Activated T-helper 1 cell treated with anti-CD3 and anti-CD28 coated beads, Interleukin-12 subunit alpha, Interleukin-12 subunit beta, Interleukin-2, Interleukin-4 antibody, amounts not matched to agents 30 ng/mL and 10 ng/mL and 1 ng/mL, durations not matched to agents 14 hours and 24 hours and 36 hours (primary cell): ENCODE measurements at regions of chr14 and their contacts with region 1.

Region 1: GRCh38 chr14:21437063-21437901 is 18.6 kb downstream of the CHD8 start:
- DNase-seq: peak; percentile 97
- H3K4me3 Mint-ChIP-seq: peak overlapping the region; percentile 93
- H3K27ac Mint-ChIP-seq: peak overlapping the region; percentile 73
- H3K4me1 Mint-ChIP-seq: peaks cover 67% of the 10 kb centered on the region
- H3K27me3 Mint-ChIP-seq: no peaks in the 10 kb centered on the region

Region 2: DNA sequence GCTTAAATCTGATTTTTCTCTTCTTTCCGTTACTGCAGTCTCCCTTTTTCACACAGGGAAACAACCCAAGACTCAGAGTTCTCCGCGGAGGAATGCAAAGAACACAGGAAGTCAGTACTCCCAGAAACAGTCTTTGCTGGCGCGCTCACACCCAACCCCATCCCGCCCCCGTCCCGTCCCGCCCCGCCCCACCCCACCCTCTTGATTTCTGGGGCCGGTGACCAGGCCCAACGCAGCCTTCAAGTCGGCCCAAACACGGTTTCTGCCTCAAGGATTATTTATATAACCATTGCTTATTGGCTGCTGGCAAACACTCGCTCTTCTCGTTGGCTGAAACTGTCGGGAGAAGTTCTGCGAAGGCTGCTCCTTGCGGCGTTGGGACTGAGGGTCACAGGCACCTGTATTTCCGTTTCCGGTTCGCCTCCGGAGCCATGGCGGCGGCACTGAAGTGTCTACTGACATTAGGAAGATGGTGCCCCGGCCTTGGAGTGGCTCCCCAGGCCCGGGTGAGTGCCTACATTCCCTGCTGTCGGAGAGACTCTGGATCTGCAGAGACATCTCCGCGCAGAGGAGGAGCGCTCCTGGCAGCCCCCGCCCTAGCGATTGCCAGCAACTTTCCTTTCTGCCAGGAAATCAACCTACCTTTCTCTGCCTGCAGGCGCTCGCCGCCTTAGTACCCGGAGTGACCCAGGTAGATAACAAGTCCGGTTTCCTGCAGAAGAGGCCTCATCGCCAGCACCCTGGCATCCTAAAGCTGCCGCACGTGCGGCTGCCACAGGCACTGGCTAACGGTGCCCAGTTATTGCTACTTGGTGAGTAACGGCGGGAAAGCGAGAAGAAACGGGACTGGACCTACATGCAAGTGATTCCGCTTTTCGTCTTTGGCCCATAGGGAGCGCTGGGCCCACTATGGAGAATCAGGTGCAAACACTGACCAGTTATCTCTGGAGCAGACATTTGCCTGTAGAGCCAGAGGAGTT is 447.4 kb before region 1 on chr14 and contains the start of gene METTL17:
- intact Hi-C with region 1: loop called (anchors 1 kb)
- DNase-seq: peak; percentile 83
- H3K4me3 Mint-ChIP-seq: peak within 1 kb of the TSS; percentile 96
- H3K27ac Mint-ChIP-seq: peak within 1 kb of the TSS; percentile 85
- H3K4me1 Mint-ChIP-seq: peaks cover 25% of the 10 kb centered on the region
- H3K27me3 Mint-ChIP-seq: no peaks in the 10 kb centered on the region
- total RNA-seq, gene METTL17: 96.1 and 100 TPM in 2 replicates

Region 3: GRCh38 chr14:21414137-21414631 is 23.1 kb before region 1 on chr14:
- intact Hi-C with region 1: loop called (anchors 1 kb)
- DNase-seq: no peak
- H3K4me3 Mint-ChIP-seq: peak overlapping the region; percentile 19
- H3K27ac Mint-ChIP-seq: peak overlapping the region; percentile 92
- H3K4me1 Mint-ChIP-seq: peaks cover 26% of the 10 kb centered on the region
- H3K27me3 Mint-ChIP-seq: no peaks in the 10 kb centered on the region

Region 4: GRCh38 chr14:21476925-21477681 is 39.8 kb after region 1 on chr14 and contains the starts of genes RAB2B and TOX4:
- intact Hi-C with region 1: loop called (anchors 1 kb)
- DNase-seq: peak; percentile 96
- H3K4me3 Mint-ChIP-seq: peak within 1 kb of the TSS; percentile 100
- H3K27ac Mint-ChIP-seq: peak within 1 kb of the TSS; percentile 99
- H3K4me1 Mint-ChIP-seq: peaks cover 35% of the 10 kb centered on the region
- H3K27me3 Mint-ChIP-seq: peaks cover 2% of the 10 kb centered on the region
- total RNA-seq, gene RAB2B: 30.3 and 32.5 TPM in 2 replicates
- total RNA-seq, gene TOX4: 77.5 and 86.6 TPM in 2 replicates

Region 5: GRCh38 chr14:21525962-21526671 is 88.8 kb after region 1 on chr14 and contains the start of gene SALL2:
- intact Hi-C with region 1: loop called (anchors 1 kb)
- DNase-seq: peak; percentile 35
- H3K4me3 Mint-ChIP-seq: peak within 1 kb of the TSS; percentile 81
- H3K27ac Mint-ChIP-seq: peak within 1 kb of the TSS; percentile 68
- H3K4me1 Mint-ChIP-seq: peaks cover 5% of the 10 kb centered on the region
- H3K27me3 Mint-ChIP-seq: peaks cover 7% of the 10 kb centered on the region
- total RNA-seq, gene SALL2: 1.3 and 1.6 TPM in 2 replicates